Activated CD4-positive, alpha-beta memory T cell treated with anti-CD3 and anti-CD28 coated beads for 36 hours (primary cell): ENCODE measurements at regions of chr11 and their contacts with region 1.

Region 1: GRCh38 chr11:95556342-95557163 is 233.0 kb downstream of the FAM76B start:
- DNase-seq: peak; percentile 56
- H3K4me3 Mint-ChIP-seq: peak overlapping the region; percentile 38
- H3K27ac Mint-ChIP-seq: peak overlapping the region; percentile 90
- H3K4me1 Mint-ChIP-seq: peaks cover 27% of the 10 kb centered on the region
- H3K27me3 Mint-ChIP-seq: no peaks in the 10 kb centered on the region

Region 2: DNA sequence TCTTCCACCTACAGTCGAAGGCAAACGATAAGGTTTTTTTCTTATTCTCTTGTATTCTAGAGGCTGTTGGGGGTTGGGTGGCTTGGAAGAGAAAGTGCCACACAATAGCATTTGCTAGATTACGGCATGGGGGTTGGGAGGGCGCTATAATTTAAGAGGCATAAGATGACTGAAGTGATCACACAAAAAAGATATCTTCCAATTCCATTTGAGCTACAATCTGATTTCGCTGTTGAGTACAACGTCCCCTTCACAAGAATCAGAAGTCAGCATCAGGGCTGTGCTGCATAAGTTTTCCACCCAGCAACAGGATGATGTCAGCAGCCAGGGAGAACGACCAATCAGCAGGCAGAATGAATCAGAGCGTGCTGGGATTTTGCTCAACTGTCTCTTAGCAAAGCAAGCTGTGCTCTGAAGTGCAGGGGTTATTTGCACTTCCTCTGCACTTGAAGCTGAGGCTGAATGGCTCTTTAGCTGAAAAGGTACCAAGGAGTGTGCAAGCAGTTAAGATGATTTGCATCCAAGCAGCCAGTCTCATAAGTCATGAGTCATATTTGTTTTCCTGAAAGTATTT is 302.3 kb before region 1 on chr11:
- CTCF ChIA-PET with region 1: no interaction called
- POLR2A ChIA-PET with region 1: interaction called, 3 read pairs
- intact Hi-C with region 1: loop called (anchors 1 kb)
- DNase-seq: peak; percentile 91
- H3K4me3 Mint-ChIP-seq: peak overlapping the region; percentile 81
- H3K27ac Mint-ChIP-seq: peak overlapping the region; percentile 93
- H3K4me1 Mint-ChIP-seq: peaks cover 42% of the 10 kb centered on the region
- H3K27me3 Mint-ChIP-seq: no peaks in the 10 kb centered on the region

Region 3: GRCh38 chr11:95487391-95487790 is 69.2 kb before region 1 on chr11:
- CTCF ChIA-PET with region 1: no interaction called
- POLR2A ChIA-PET with region 1: no interaction called
- intact Hi-C with region 1: loop called (anchors 1 kb)
- DNase-seq: peak; percentile 67
- H3K4me3 Mint-ChIP-seq: no peak overlapping the region
- H3K27ac Mint-ChIP-seq: no peak overlapping the region
- H3K4me1 Mint-ChIP-seq: peaks cover 7% of the 10 kb centered on the region
- H3K27me3 Mint-ChIP-seq: no peaks in the 10 kb centered on the region

Region 4: DNA sequence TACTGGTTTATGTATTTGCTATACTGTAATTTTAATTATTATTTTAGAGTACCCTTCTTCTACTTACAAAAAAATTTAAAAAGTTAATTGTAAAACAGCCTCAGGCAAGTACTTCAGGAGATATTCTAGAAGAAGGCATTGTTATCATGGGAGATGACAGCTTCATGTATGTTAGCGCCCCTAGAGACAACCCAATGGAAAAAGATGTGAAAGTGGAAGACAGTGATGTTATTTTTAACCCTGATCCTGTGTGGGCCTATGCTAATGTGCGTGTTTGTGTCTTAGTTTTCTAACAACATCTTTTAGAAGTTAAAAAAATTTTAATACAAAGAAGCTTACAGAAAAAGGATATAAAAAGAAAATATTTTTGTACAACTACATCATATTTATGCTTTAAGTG is 28.0 kb after region 1 on chr11:
- CTCF ChIA-PET with region 1: interaction called, 5 read pairs
- POLR2A ChIA-PET with region 1: interaction called, 3 read pairs
- intact Hi-C with region 1: loop called (anchors 1 kb)
- DNase-seq: no peak
- H3K4me3 Mint-ChIP-seq: no peak overlapping the region
- H3K27ac Mint-ChIP-seq: no peak overlapping the region
- H3K4me1 Mint-ChIP-seq: peaks cover 18% of the 10 kb centered on the region
- H3K27me3 Mint-ChIP-seq: no peaks in the 10 kb centered on the region

Region 5: GRCh38 chr11:96524475-96524874 is 967.9 kb after region 1 on chr11:
- CTCF ChIA-PET with region 1: no interaction called
- POLR2A ChIA-PET with region 1: no interaction called
- intact Hi-C with region 1: no loop called
- DNase-seq: no peak
- H3K4me3 Mint-ChIP-seq: no peak overlapping the region
- H3K27ac Mint-ChIP-seq: no peak overlapping the region
- H3K4me1 Mint-ChIP-seq: no peaks in the 10 kb centered on the region
- H3K27me3 Mint-ChIP-seq: peaks cover 9% of the 10 kb centered on the region